ENCODE measurements at regions of chr3 and their contacts with region 1.

Region 1: GRCh38 chr3:18424729-18425640 is at the start of gene SATB1:
- DNase-seq: peak; percentile 27 to 86
- H3K4me3 ChIP-seq: peak within 1 kb of the TSS; percentile 76 to 78
- H3K27ac ChIP-seq: peak within 1 kb of the TSS; percentile 74 to 83
- H3K4me1 ChIP-seq: peaks cover 0 to 8% of the 10 kb centered on the region in 2 donors
- H3K27me3 ChIP-seq: no peaks in the 10 kb centered on the region
- CTCF ChIP-seq: no peak
- total RNA-seq, gene SATB1: 7.7 TPM

Region 2: DNA sequence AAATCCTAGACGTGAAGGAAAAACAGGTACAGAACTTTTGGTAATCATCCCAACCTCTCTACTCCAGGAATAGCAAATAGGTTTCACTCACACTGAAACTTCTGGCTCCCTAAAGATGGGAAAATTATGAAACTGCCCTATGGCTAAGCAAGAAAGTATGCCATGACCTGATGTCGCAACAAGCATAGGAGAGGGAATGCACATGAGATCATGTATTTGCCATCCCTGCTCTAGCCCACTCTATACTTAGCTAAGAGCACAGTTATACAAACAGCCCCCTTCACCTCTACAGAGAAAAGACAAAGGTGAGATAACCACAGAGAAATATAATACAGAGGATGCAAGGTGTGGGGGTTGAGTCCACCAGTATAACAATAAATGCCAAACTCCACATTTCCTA is 785.2 kb before region 1 on chr3:
- intact Hi-C with region 1: loop called (anchors 5 kb)
- DNase-seq: peak in 1 of 2 donors; percentile 79
- H3K4me3 ChIP-seq: no peak overlapping the region
- H3K27ac ChIP-seq: peak overlapping the region; percentile 72 to 82
- H3K4me1 ChIP-seq: peaks cover 7 to 44% of the 10 kb centered on the region in 2 donors
- H3K27me3 ChIP-seq: no peaks in the 10 kb centered on the region
- CTCF ChIP-seq: no peak

Region 3: GRCh38 chr3:17742108-17742879 is 682.7 kb before region 1 on chr3 and contains the start of gene TBC1D5:
- intact Hi-C with region 1: loop called (anchors 10 kb)
- DNase-seq: peak; percentile 87 to 98
- H3K4me3 ChIP-seq: peak within 1 kb of the TSS; percentile 68 to 96
- H3K27ac ChIP-seq: peak within 1 kb of the TSS; percentile 93 to 98
- H3K4me1 ChIP-seq: peaks cover 2 to 17% of the 10 kb centered on the region in 2 donors
- H3K27me3 ChIP-seq: no peaks in the 10 kb centered on the region
- CTCF ChIP-seq: peak in 1 of 3 experiments; percentile 11
- total RNA-seq, gene TBC1D5: 43.3 TPM

Region 4: DNA sequence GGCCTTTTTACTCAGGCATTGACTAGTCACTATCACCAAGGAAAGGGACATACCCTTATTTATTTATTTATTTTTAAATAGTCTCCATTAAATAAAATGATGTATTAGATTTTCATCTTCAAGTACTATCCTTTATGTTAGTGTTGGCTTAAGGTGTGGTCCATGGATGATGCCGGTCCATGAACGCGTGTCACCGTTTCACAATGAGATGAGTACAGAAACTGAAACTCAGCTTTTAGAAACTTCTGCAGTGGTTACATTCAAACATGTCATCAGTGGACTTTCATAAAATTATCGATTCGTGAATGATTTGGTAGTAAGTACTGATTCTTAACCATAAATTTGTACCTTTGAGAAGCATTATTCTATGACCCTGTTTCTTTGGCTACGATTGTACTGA is 166.5 kb before region 1 on chr3:
- intact Hi-C with region 1: no loop called
- DNase-seq: no peak
- H3K4me3 ChIP-seq: no peak overlapping the region
- H3K27ac ChIP-seq: no peak overlapping the region
- H3K4me1 ChIP-seq: no peaks in the 10 kb centered on the region
- H3K27me3 ChIP-seq: no peaks in the 10 kb centered on the region
- CTCF ChIP-seq: no peak

Region 5: GRCh38 chr3:18444595-18445400 is 19.8 kb after region 1 on chr3:
- intact Hi-C with region 1: loop called (anchors 1 kb)
- DNase-seq: peak in 1 of 2 donors; percentile 73
- H3K4me3 ChIP-seq: peak overlapping the region; percentile 69 to 96
- H3K27ac ChIP-seq: peak overlapping the region; percentile 36 to 62
- H3K4me1 ChIP-seq: peaks cover 11 to 14% of the 10 kb centered on the region in 2 donors
- H3K27me3 ChIP-seq: no peaks in the 10 kb centered on the region
- CTCF ChIP-seq: peak in 2 of 3 experiments; percentile 11 to 74

Region 6: DNA sequence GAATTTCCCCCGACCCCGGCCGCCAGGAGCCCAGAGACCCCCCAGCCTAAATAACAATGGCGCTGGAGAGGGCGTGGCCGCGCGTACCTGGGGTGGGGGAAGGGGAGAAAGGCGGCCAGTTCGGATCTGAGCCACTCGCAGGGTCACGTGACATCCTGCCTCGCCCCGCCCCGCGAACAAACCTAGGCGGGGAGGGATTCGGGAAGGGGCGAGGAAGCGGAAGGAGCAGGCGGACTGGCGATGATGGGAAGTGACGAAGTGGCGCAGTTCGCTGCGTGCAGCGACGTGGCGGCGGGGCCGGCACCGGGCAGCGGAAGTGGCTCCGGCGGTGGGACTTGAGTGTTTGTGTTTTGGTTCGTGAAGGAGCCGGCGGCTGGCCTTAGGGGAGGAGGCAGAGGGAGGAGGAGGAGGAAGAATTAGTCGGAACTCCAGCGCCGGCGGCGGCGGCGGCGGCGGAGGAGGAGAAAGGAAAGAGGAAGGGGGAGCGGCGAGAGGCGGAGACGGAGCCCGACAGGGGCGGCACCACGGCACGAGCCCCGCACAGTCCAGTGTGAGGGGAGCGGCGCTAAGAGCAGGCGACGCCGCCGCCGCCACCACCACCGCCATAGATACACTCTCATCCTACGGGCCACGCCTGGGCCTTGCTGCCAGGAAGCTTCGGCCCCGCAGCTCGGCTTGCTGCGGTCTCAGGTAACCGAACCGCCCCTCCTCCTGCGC is 1522.0 kb after region 1 on chr3 and contains the start of gene RAB5A:
- intact Hi-C with region 1: loop called (anchors 10 kb)
- DNase-seq: peak; percentile 95 to 99
- H3K4me3 ChIP-seq: peak within 1 kb of the TSS; percentile 94 to 99
- H3K27ac ChIP-seq: peak within 1 kb of the TSS; percentile 100
- H3K4me1 ChIP-seq: peaks cover 10 to 21% of the 10 kb centered on the region in 2 donors
- H3K27me3 ChIP-seq: no peaks in the 10 kb centered on the region
- CTCF ChIP-seq: no peak
- total RNA-seq, gene RAB5A: 54.9 TPM

Measured in ascending aorta (tissue), 2 donors.